Activated CD4-positive, alpha-beta memory T cell treated with anti-CD3 and anti-CD28 coated beads for 36 hours (primary cell): ENCODE measurements at regions of chr19 and their contacts with region 1.

Region 1: DNA sequence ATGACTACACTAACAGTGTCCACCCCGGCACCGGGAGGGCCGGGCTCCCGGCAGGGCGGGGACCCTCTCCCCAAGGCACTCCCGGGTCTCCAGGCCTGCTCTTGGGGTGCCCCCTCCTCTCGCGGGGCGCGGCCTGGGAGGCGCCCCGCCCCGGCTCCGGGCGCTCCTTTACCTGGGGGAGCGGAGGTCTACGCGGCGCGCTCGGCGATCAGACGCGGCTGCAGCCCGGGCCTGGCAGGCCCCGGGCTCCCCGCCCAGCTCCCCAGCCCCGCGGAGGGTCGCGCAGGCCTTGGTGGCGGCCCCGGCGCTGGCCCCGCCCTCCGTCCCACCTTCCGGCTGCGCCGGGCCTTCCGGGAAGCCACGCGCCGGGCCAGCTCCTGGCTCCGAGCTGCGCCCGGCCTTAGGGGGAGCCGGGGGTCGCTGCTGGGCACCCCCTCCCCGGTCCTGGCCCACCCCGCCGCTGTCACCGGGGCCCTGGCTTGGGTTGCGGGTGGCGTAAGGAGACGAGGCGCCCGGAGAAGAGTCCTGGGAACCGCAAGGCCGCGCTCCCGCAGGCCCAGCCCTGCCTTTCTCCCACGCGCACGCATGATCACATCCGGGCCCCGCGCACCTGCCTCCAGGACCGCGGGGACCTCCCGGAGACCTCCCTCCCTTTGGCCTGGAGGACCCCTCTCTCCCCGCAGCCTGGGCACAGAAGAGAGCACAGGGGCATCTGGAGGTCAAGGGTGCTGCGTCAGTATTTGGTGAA is at the start of gene C19orf12:
- DNase-seq: peak; percentile 74
- H3K4me3 Mint-ChIP-seq: peak within 1 kb of the TSS; percentile 87
- H3K27ac Mint-ChIP-seq: peak within 1 kb of the TSS; percentile 98
- H3K4me1 Mint-ChIP-seq: peaks cover 48% of the 10 kb centered on the region
- H3K27me3 Mint-ChIP-seq: no peaks in the 10 kb centered on the region
- total RNA-seq, gene C19orf12: 32.6 to 32.8 TPM

Region 2: GRCh38 chr19:29528350-29528945 is 186.7 kb before region 1 on chr19:
- CTCF ChIA-PET with region 1: no interaction called
- POLR2A ChIA-PET with region 1: interaction called, 3 read pairs
- intact Hi-C with region 1: loop called (anchors 10 kb)
- DNase-seq: peak; percentile 82
- H3K4me3 Mint-ChIP-seq: peak overlapping the region; percentile 29
- H3K27ac Mint-ChIP-seq: no peak overlapping the region
- H3K4me1 Mint-ChIP-seq: peaks cover 34% of the 10 kb centered on the region
- H3K27me3 Mint-ChIP-seq: peaks cover 68% of the 10 kb centered on the region

Region 3: DNA sequence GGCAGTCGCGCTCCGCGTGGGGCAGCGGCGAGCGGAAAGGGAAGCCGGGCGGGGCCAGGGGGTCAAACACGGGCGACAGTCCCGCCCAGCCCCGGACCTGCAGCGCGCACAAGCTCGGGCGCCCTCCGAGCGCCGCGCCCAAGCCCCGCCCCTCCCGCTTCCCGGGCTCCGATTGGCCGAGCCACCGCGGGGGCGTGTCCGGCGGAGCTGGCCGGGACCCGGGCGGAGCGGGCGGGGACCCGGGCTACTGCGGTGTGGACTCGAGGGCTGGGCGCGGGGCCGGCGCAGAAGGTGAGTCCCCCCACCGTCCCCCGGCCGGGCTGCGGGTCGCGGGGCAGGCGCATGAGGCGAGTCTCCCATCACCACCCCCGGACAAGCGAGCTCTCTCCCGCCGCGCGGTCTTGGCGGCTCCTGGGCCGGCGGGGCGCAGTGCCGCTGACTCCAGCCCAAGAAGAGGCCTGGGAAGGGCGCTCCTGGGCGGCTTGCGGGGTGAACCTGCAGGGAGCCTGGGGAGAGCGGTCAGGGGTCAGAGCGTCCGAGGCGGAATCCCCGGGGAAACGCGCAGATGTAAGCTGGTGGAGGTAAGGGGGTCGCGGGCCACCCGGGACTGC is 49.8 kb before region 1 on chr19 and contains the start of gene PLEKHF1:
- CTCF ChIA-PET with region 1: interaction called, 70 read pairs
- POLR2A ChIA-PET with region 1: interaction called, 9 read pairs
- intact Hi-C with region 1: loop called (anchors 2 kb)
- DNase-seq: peak; percentile 91
- H3K4me3 Mint-ChIP-seq: peak within 1 kb of the TSS; percentile 82
- H3K27ac Mint-ChIP-seq: peak within 1 kb of the TSS; percentile 99
- H3K4me1 Mint-ChIP-seq: peaks cover 64% of the 10 kb centered on the region
- H3K27me3 Mint-ChIP-seq: no peaks in the 10 kb centered on the region
- total RNA-seq, gene PLEKHF1: 23.6 to 24.3 TPM

Region 4: DNA sequence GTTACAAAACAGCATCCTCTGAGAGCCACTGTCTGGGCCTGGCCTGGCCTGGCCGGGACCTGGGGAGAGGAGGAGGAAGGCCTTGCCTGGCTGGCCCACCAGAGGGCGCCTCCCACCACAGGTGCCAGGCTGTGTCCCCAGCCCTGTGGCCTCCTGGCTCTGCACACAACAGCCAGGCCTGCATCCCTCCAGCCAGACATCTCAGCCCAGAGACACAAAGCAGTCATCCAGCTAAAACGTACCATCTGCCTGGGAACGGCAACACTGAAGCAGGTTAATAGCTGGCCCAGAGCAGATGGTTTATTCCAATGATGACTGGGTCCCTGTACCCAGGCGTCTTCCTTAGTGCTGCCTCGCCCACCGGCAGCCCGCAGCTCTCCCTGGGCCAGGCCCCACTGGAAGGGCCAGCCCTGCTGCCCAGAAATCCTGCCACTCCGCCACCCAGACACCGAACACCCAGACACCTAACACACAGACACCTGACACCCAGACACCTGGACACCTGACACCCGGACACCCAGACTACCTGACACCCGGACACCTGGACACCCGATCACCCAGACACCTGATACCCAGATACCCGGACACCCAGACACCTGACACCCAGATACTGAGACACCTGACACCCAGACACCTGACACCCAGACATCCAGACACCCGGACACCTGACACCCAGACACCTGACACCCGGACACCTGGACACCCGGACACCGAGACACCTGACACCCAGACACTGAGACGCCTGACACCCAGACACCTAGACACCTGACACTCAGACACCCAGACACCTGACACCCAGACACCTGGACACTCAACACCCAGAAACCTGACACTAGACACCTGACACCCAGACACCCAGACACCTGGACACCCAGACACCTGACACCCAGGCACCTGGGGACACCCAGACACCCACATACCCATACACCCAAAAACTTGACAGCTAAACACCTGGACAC is 20.2 kb before region 1 on chr19:
- CTCF ChIA-PET with region 1: interaction called, 121 read pairs
- POLR2A ChIA-PET with region 1: interaction called, 4 read pairs
- intact Hi-C with region 1: loop called (anchors 1 kb)
- DNase-seq: peak; percentile 87
- H3K4me3 Mint-ChIP-seq: no peak overlapping the region
- H3K27ac Mint-ChIP-seq: no peak overlapping the region
- H3K4me1 Mint-ChIP-seq: peaks cover 11% of the 10 kb centered on the region
- H3K27me3 Mint-ChIP-seq: no peaks in the 10 kb centered on the region

Region 5: GRCh38 chr19:29735800-29736199 is 20.7 kb after region 1 on chr19:
- CTCF ChIA-PET with region 1: interaction called, 18 read pairs
- POLR2A ChIA-PET with region 1: interaction called, 3 read pairs
- intact Hi-C with region 1: no loop called
- DNase-seq: no peak
- H3K4me3 Mint-ChIP-seq: no peak overlapping the region
- H3K27ac Mint-ChIP-seq: no peak overlapping the region
- H3K4me1 Mint-ChIP-seq: no peaks in the 10 kb centered on the region
- H3K27me3 Mint-ChIP-seq: peaks cover 7% of the 10 kb centered on the region